ENCODE measurements at regions of chr12 and their contacts with region 1.

Region 1: GRCh38 chr12:52879394-52880351 is 25.2 kb downstream of the KRT8 start:
- DNase-seq: peak; percentile 94
- H3K4me3 Mint-ChIP-seq: peak overlapping the region; percentile 48
- H3K27ac Mint-ChIP-seq: no peak overlapping the region
- H3K4me1 Mint-ChIP-seq: peaks cover 48% of the 10 kb centered on the region
- H3K27me3 Mint-ChIP-seq: no peaks in the 10 kb centered on the region
- CTCF ChIP-seq: peak; percentile 89

Region 2: GRCh38 chr12:52139552-52140062 is 740.1 kb before region 1 on chr12:
- CTCF ChIA-PET with region 1: interaction called, 313 read pairs
- POLR2A ChIA-PET with region 1: interaction called, 142 read pairs
- intact Hi-C with region 1: loop called (anchors 1 kb)
- DNase-seq: peak; percentile 75
- H3K4me3 Mint-ChIP-seq: no peak overlapping the region
- H3K27ac Mint-ChIP-seq: no peak overlapping the region
- H3K4me1 Mint-ChIP-seq: peaks cover 25% of the 10 kb centered on the region
- H3K27me3 Mint-ChIP-seq: no peaks in the 10 kb centered on the region
- CTCF ChIP-seq: peak; percentile 97

Region 3: GRCh38 chr12:52327052-52327829 is 552.4 kb before region 1 on chr12:
- CTCF ChIA-PET with region 1: interaction called, 21 read pairs
- POLR2A ChIA-PET with region 1: no interaction called
- intact Hi-C with region 1: loop called (anchors 5 kb)
- DNase-seq: peak; percentile 98
- H3K4me3 Mint-ChIP-seq: no peak overlapping the region
- H3K27ac Mint-ChIP-seq: no peak overlapping the region
- H3K4me1 Mint-ChIP-seq: peaks cover 14% of the 10 kb centered on the region
- H3K27me3 Mint-ChIP-seq: no peaks in the 10 kb centered on the region
- CTCF ChIP-seq: peak; percentile 97

Region 4: DNA sequence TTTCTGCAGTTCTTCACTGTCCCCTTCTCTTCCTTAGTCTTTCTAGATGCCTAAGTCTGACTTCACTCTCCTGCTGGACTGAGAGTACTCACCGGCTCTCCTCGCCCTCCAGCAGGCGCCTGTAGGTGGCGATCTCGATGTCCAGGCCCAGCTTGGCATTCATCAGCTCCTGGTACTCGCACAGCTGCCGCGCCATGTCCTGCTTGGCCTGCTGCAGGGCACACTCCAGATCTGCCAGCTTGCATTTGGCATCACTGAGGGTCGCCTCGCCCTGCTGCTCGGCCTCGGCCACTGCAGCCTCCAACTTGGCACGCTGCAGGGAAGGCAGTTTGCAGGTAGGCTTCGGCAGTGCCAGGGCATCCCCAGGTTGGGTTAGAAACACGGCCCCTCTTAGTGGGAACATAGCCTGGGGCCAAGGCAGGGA is 499.4 kb before region 1 on chr12:
- CTCF ChIA-PET with region 1: interaction called, 15 read pairs
- POLR2A ChIA-PET with region 1: interaction called, 3 read pairs
- intact Hi-C with region 1: no loop called
- DNase-seq: peak; percentile 59
- H3K4me3 Mint-ChIP-seq: no peak overlapping the region
- H3K27ac Mint-ChIP-seq: no peak overlapping the region
- H3K4me1 Mint-ChIP-seq: no peaks in the 10 kb centered on the region
- H3K27me3 Mint-ChIP-seq: no peaks in the 10 kb centered on the region
- CTCF ChIP-seq: peak; percentile 59

Region 5: GRCh38 chr12:52506858-52507715 is 372.6 kb before region 1 on chr12:
- CTCF ChIA-PET with region 1: interaction called, 27 read pairs
- POLR2A ChIA-PET with region 1: interaction called, 675 read pairs
- intact Hi-C with region 1: no loop called
- DNase-seq: peak; percentile 75
- H3K4me3 Mint-ChIP-seq: no peak overlapping the region
- H3K27ac Mint-ChIP-seq: peak overlapping the region; percentile 4
- H3K4me1 Mint-ChIP-seq: peaks cover 18% of the 10 kb centered on the region
- H3K27me3 Mint-ChIP-seq: no peaks in the 10 kb centered on the region
- CTCF ChIP-seq: peak; percentile 50

Region 6: GRCh38 chr12:52582971-52583456 is 296.7 kb before region 1 on chr12:
- CTCF ChIA-PET with region 1: interaction called, 366 read pairs
- POLR2A ChIA-PET with region 1: interaction called, 40 read pairs
- intact Hi-C with region 1: loop called (anchors 1 kb)
- DNase-seq: peak; percentile 82
- H3K4me3 Mint-ChIP-seq: no peak overlapping the region
- H3K27ac Mint-ChIP-seq: no peak overlapping the region
- H3K4me1 Mint-ChIP-seq: peaks cover 26% of the 10 kb centered on the region
- H3K27me3 Mint-ChIP-seq: no peaks in the 10 kb centered on the region
- CTCF ChIP-seq: peak; percentile 76

Region 7: DNA sequence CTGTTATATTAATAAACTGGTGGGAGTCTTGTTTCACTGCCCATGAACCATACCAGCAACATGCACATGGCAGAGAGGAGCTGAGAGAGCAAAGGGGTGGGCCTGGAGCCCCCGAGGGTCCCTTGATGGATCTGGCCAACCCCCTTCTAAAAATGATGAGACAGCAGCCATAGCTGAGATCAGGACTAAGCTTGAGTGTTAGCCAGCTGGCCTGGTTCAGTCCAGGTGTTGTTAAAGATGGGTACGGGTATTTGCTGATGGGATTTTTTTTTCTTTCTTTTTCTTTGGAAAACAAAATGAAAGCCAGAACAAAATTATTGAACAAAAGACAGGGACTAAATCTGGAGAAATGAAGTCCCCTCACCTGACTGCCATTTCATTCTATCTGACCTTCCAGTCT is 588.2 kb after region 1 on chr12:
- CTCF ChIA-PET with region 1: no interaction called
- POLR2A ChIA-PET with region 1: no interaction called
- intact Hi-C with region 1: no loop called
- DNase-seq: no peak
- H3K4me3 Mint-ChIP-seq: no peak overlapping the region
- H3K27ac Mint-ChIP-seq: no peak overlapping the region
- H3K4me1 Mint-ChIP-seq: peaks cover 36% of the 10 kb centered on the region
- H3K27me3 Mint-ChIP-seq: no peaks in the 10 kb centered on the region
- CTCF ChIP-seq: no peak

Measured in MCF 10A (cell line).